Body of pancreas (tissue), 4 donors: ENCODE measurements at regions of chr13 and their contacts with region 1.

Region 1: DNA sequence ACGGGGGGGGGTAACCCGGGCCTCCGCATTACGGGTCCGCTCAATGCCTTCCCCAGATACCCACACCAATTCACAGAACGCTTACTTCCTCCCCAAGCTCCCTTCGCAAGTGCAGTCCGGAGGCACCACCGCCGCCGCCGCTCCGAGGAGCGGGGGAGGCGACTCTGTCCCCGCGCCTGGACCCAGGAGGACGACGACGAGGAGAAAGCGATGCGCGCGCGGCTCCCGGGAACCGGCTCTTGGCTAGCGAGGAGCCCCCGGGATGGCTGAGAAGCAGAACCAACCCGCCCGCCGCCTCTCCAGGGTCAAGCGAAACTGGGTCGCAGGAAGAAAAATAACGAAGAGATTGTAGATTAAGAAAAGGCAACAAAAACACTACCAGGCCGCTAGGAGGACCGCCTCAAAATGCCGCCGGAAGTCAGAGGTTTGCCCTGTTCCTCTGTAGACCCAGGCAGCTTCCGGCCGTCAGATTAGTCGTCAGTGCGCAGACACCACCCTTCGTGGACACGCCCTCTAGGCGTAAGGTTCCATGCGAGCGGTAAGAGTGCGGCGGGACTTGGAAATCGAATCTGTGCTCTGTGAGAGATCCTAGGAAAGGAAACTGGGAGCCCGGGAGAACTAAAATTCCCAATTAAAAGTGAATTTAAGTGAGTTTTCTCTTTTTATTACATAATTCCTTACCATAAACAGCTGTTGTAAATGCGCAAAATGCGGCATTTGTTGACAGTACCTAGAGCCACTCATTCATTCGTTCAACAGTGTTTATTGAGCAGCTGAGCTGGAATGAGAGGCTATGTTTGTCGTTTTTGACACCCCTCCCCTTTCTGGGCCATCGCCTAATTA is at the start of gene ZC3H13:
- DNase-seq: peak; percentile 92 to 97 (median 94)
- ATAC-seq: peak; percentile 100
- H3K4me3 ChIP-seq: peak within 1 kb of the TSS; percentile 69 to 89
- H3K27ac ChIP-seq: peak within 1 kb of the TSS; percentile 12 to 94 (median 84)
- H3K4me1 ChIP-seq: peaks cover 27% of the 10 kb centered on the region
- H3K27me3 ChIP-seq: peaks cover 0 to 4% of the 10 kb centered on the region in 2 donors
- CTCF ChIP-seq: peak in 6 of 7 experiments; percentile 10 to 79 (median 64)
- POLR2A ChIP-seq: peak; percentile 34 to 84 (median 82)
- total RNA-seq, gene ZC3H13: 12.7 to 31.0 TPM

Region 2: GRCh38 chr13:46126552-46127357 is 74.2 kb after region 1 on chr13:
- intact Hi-C with region 1: loop called (anchors 10 kb)
- DNase-seq: peak; percentile 71 to 88 (median 80)
- ATAC-seq: peak; percentile 90
- H3K4me3 ChIP-seq: no peak overlapping the region
- H3K27ac ChIP-seq: no peak overlapping the region
- H3K4me1 ChIP-seq: peaks cover 13% of the 10 kb centered on the region
- H3K27me3 ChIP-seq: no peaks in the 10 kb centered on the region
- CTCF ChIP-seq: peak; percentile 60 to 90 (median 78)
- POLR2A ChIP-seq: no peak